Left cardiac atrium (tissue), 4 donors: ENCODE measurements at regions of chr20 and their contacts with region 1.

Region 1: GRCh38 chr20:33686100-33686983 is at the start of gene E2F1:
- DNase-seq: peak; percentile 97
- ATAC-seq: peak; percentile 98 to 99
- total RNA-seq, gene E2F1: 1.6 to 3.7 TPM

Region 2: DNA sequence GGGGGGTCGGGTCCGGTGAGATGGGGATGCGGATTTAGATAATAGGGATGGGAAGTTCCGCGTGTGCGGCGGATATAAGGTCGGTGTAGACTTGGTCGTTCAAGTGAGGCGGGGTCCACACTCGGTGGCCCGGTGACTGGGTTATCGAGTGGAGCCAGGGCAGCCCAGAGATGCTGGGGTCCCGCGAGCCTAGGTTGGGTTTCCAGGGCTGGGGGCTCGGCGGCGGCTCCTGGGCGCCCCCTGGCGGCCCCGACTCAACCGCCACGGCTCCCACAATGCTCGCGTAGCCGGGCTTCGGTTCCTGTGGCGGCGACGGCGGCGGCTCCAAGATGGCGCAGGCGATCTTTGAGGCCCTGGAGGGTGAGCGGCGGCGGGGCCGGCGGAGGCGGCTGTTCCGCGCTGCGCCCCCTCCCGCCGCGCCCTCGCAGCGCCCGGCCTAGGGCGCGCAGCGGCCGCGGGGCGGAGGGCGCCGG is 45.4 kb after region 1 on chr20 and contains the start of gene ZNF341:
- intact Hi-C with region 1: loop called in 1 of 2 experiments (anchors 5 kb)
- DNase-seq: peak; percentile 91
- ATAC-seq: peak; percentile 86 to 90
- total RNA-seq, gene ZNF341: 1.1 to 2.0 TPM

Region 3: GRCh38 chr20:33814238-33814712 is 127.9 kb after region 1 on chr20:
- intact Hi-C with region 1: no loop called
- DNase-seq: no peak
- ATAC-seq: no peak

Region 4: DNA sequence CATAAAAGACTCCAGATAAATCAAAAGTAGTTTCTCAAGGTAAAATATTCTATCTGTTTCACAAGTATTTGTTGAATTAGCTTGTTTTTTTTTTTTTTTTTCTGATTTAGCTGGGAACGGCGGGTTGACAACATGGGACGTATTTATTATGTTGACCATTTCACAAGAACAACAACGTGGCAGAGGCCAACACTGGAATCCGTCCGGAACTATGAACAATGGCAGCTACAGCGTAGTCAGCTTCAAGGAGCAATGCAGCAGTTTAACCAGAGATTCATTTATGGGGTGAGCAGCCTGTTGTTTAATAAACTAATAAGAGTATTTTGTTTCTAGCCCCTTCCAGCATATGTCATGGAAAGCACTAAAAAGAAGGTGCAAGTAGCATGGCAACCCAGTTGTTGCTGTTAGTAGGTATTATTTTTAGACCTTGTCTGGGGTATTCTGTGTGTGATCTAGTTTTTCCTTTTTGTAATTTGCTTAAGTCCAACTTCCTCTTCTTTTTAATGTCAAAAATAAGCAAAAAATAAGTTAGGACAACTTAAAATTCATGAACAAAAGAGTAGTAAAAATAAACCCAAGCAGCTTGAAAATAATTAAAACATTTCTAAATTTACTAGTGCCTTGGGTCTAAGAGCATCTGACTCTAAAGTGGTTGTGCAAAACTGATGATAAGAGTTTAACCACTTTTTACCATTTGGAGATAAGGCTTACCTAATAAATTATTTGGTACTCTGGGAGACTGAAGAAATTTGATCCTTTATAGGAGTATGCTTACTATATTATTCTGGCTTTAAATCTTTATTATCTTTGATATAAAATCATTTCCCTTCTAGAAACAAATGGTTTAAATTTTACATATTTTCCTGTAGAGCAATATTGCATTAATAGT is 759.1 kb after region 1 on chr20:
- intact Hi-C with region 1: no loop called
- DNase-seq: no peak
- ATAC-seq: no peak